Sigmoid colon (tissue), 7 donors: ENCODE measurements at regions of chr19 and their contacts with region 1.

Region 1: DNA sequence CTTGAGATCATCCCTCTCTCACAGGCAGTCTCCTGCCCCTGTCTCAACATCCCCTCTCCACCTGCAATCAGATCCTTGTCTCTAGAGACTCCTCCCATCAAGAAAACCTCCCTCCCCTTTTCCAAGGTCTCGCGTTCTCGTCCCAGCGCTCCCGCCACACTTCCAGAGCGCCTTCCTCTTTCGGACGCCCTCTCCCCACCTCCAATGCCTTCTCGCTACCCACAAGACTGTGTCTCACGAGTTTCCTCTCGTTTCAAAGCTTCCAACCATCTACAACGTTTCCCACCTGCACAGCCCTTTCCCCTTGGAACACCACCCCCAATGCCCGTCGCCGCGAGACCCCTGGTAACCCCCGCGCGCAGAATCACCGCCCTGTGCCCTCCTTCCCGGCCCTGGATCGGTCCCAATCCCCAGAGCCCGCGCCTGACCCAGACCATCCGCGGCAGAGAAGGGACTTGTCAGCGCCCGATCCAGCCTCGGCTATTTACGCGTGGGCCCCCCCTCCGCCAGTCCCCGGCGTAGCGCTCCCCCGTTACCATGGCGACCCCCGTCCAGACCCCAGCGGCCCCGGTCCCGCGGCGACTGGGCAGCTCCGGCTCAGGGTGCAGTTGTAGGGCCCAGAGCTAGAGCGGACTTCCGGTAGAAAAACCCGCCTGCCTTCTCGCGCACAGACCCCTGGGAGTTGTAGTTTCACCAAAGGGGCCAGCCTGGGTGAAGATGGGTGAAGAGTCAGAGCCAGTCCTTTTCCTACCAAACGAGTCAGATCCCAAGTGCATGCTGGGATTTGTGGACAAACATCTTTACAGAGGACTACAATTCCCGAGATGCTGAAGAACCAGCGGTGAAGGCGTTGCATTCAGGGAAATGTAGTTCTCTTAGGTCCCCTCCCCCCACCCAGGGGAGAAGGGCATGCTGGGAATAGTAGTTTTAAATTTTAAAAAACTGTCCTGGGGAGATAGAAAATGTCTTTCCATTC is at the start of gene AP2S1:
- DNase-seq: peak; percentile 98
- H3K4me3 ChIP-seq: peak within 1 kb of the TSS; percentile 73 to 96 (median 92)
- H3K27ac ChIP-seq: peak within 1 kb of the TSS; percentile 87 to 97 (median 93)
- H3K4me1 ChIP-seq: peaks cover 0 to 50% (median 42%) of the 10 kb centered on the region in 4 donors
- H3K27me3 ChIP-seq: no peaks in the 10 kb centered on the region
- CTCF ChIP-seq: no peak
- EP300 ChIP-seq: no peak
- POLR2A ChIP-seq: peak; percentile 76 to 79
- total RNA-seq, gene AP2S1: 52.4 to 84.3 (median 73.0) TPM

Region 2: GRCh38 chr19:46600384-46601317 is 249.9 kb before region 1 on chr19:
- intact Hi-C with region 1: loop called (anchors 10 kb)
- DNase-seq: peak; percentile 99
- H3K4me3 ChIP-seq: peak overlapping the region; percentile 73 to 97 (median 91)
- H3K27ac ChIP-seq: peak overlapping the region; percentile 93 to 95 (median 94)
- H3K4me1 ChIP-seq: peaks cover 0 to 48% (median 41%) of the 10 kb centered on the region in 4 donors
- H3K27me3 ChIP-seq: no peaks in the 10 kb centered on the region
- CTCF ChIP-seq: no peak
- EP300 ChIP-seq: no peak
- POLR2A ChIP-seq: peak in 1 of 2 donors; percentile 77

Region 3: GRCh38 chr19:46813839-46814363 is 36.6 kb before region 1 on chr19:
- intact Hi-C with region 1: no loop called
- DNase-seq: peak; percentile 69
- H3K4me3 ChIP-seq: no peak overlapping the region
- H3K27ac ChIP-seq: peak overlapping the region in 1 of 4 donors; percentile 23
- H3K4me1 ChIP-seq: peaks cover 0 to 10% (median 0%) of the 10 kb centered on the region in 4 donors
- H3K27me3 ChIP-seq: no peaks in the 10 kb centered on the region
- CTCF ChIP-seq: no peak
- EP300 ChIP-seq: no peak
- POLR2A ChIP-seq: no peak

Region 4: GRCh38 chr19:46840136-46840942 is 10.2 kb before region 1 on chr19:
- intact Hi-C with region 1: no loop called
- DNase-seq: peak; percentile 77
- H3K4me3 ChIP-seq: no peak overlapping the region
- H3K27ac ChIP-seq: peak overlapping the region; percentile 60 to 79 (median 69)
- H3K4me1 ChIP-seq: peaks cover 0 to 34% (median 29%) of the 10 kb centered on the region in 4 donors
- H3K27me3 ChIP-seq: no peaks in the 10 kb centered on the region
- CTCF ChIP-seq: peak; percentile 72 to 86 (median 78)
- EP300 ChIP-seq: no peak
- POLR2A ChIP-seq: no peak

Region 5: DNA sequence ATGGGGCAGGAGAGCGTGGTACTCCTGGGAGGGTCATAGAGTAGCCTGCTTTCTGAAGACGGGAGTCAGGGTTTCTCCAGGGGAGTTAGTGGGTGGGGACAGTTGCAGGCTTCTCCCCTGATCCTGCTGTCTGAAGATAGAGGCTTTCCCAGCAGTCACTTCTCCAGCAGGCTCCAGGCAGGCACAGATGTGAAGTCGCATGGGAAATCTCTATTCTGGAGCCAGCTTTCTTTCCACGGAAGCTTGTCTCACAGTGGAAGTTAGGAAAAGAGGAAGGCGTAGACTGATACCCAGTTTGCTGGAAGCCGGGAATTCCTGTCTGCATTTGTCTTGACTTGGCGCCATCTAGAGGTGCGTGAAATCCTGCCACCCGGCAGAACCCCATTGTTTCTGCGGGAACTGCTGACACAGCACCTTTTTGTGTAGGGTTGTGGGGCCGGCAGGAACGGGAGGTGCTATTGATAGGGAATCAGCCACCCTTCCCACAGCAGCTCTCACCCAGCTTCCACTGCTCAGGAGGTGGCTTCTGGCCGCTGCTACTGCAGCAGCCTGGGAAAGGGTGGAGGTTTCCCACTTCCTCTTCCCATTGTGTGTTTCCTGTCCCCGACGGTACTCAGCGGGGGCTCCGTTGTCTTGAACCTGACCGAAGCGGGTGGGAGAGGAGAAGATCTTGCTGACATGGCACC is 140.6 kb after region 1 on chr19:
- intact Hi-C with region 1: no loop called
- DNase-seq: peak; percentile 93
- H3K4me3 ChIP-seq: no peak overlapping the region
- H3K27ac ChIP-seq: peak overlapping the region; percentile 51 to 64 (median 58)
- H3K4me1 ChIP-seq: peaks cover 0 to 17% (median 12%) of the 10 kb centered on the region in 4 donors
- H3K27me3 ChIP-seq: no peaks in the 10 kb centered on the region
- CTCF ChIP-seq: peak; percentile 66 to 88 (median 75)
- EP300 ChIP-seq: no peak
- POLR2A ChIP-seq: no peak